Right cardiac atrium (tissue), 5 donors: ENCODE measurements at regions of chrX and their contacts with region 1.

Region 1: GRCh38 chrX:53616946-53617345 is 69.6 kb downstream of the HUWE1 start:
- DNase-seq: no peak
- ATAC-seq: no peak
- H3K4me3 ChIP-seq: no peak overlapping the region
- H3K27ac ChIP-seq: no peak overlapping the region
- H3K4me1 ChIP-seq: no peaks in the 10 kb centered on the region
- H3K27me3 ChIP-seq: no peaks in the 10 kb centered on the region

Region 2: GRCh38 chrX:53330331-53330730 is 286.6 kb before region 1 on chrX:
- intact Hi-C with region 1: no loop called
- DNase-seq: no peak
- ATAC-seq: no peak
- H3K4me3 ChIP-seq: no peak overlapping the region
- H3K27ac ChIP-seq: no peak overlapping the region
- H3K4me1 ChIP-seq: no peaks in the 10 kb centered on the region
- H3K27me3 ChIP-seq: no peaks in the 10 kb centered on the region

Region 3: GRCh38 chrX:53563324-53563723 is 53.6 kb before region 1 on chrX:
- intact Hi-C with region 1: loop called in 1 of 4 experiments (anchors 10 kb)
- DNase-seq: no peak
- ATAC-seq: no peak
- H3K4me3 ChIP-seq: no peak overlapping the region
- H3K27ac ChIP-seq: no peak overlapping the region
- H3K4me1 ChIP-seq: no peaks in the 10 kb centered on the region
- H3K27me3 ChIP-seq: no peaks in the 10 kb centered on the region

Region 4: GRCh38 chrX:53637479-53637878 is 20.5 kb after region 1 on chrX:
- intact Hi-C with region 1: no loop called
- DNase-seq: no peak
- ATAC-seq: no peak
- H3K4me3 ChIP-seq: no peak overlapping the region
- H3K27ac ChIP-seq: no peak overlapping the region
- H3K4me1 ChIP-seq: no peaks in the 10 kb centered on the region
- H3K27me3 ChIP-seq: no peaks in the 10 kb centered on the region

Region 5: GRCh38 chrX:53669258-53669657 is 52.3 kb after region 1 on chrX:
- intact Hi-C with region 1: no loop called
- DNase-seq: no peak
- ATAC-seq: no peak
- H3K4me3 ChIP-seq: no peak overlapping the region
- H3K27ac ChIP-seq: no peak overlapping the region
- H3K4me1 ChIP-seq: no peaks in the 10 kb centered on the region
- H3K27me3 ChIP-seq: no peaks in the 10 kb centered on the region

Region 6: GRCh38 chrX:53900623-53901022 is 283.7 kb after region 1 on chrX:
- intact Hi-C with region 1: no loop called
- DNase-seq: no peak
- ATAC-seq: no peak
- H3K4me3 ChIP-seq: no peak overlapping the region
- H3K27ac ChIP-seq: no peak overlapping the region
- H3K4me1 ChIP-seq: no peaks in the 10 kb centered on the region
- H3K27me3 ChIP-seq: no peaks in the 10 kb centered on the region